ENCODE measurements at regions of chr10 and their contacts with region 1.

Region 1: DNA sequence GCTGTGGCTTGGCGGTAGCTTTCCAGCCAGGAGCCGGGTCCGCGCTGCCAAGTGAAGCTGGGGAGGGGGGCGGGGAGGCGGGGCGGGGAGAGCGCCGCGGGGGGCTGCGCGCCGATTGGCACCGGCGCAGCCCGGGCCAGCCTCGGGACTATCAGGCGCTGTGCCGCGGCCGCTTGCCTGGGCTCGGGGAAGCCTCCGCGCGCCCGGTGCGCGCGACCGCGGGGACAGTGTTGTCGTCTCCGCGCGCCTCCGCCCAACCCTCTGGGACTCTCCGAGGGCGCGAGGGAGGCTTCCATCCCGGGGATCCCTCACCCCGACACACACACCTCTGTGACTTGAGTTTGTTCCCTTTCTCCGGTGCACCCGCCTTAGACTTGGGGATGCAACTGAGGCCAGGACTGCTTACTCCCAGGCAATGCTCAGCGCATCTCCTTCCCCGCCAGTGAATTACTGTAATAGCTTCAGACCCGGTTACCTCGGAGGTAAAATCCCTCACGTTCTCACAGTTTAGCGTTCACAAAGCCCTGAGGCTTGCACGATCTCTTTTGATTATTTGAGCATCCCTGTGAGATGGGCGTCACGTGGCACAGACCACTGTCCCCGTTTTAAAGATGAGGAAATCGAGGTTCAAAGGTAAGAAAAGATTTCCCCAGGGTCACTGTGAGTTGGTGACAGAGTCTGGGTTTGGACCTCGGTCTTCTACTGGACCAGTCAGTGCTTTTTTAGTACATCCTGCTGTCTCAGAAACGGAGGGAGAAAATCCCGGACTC is at the start of gene NKX1-2:
- DNase-seq: no peak
- ATAC-seq: no peak
- total RNA-seq, gene NKX1-2: not detected

Region 2: GRCh38 chr10:125076891-125077541 is 626.8 kb after region 1 on chr10:
- intact Hi-C with region 1: loop called (anchors 10 kb)
- DNase-seq: no peak
- ATAC-seq: no peak